ENCODE measurements at regions of chr10 and their contacts with region 1.

Region 1: DNA sequence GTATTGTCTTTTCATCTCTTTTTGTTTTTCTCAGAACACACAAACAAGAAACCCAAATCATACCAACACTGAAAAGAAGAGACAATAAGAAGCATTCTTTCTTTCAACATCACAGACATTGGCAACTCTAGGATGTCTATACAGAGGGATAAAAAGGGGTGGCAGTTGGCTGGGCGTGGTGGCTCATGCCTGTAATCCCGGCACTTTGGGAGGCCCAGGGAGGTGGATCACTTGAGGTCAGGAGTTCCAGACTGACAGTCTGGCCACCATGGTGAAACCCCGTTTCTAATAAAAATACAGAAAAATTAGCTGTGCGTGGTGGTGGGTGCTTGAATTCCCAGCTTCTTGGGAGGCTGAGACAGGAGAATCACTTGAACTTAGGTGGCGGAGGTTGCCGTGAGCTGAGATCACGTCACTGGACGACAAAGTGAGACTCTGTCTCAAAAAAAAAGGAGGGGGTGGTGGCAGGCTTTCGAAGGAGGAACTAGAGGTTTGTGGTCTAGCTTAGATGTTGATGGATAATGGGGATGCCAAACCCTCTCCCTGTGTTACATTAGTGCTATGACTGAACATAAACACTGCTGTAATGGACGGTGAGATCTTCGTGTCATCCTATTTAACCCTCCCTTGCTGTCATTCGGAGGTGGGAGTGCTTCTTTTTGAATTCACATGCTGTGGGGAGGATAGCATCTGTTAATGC is 9.4 kb downstream of the CNNM2 start:
- DNase-seq: no peak
- H3K4me3 ChIP-seq: no peak overlapping the region
- H3K27ac ChIP-seq: no peak overlapping the region
- H3K4me1 ChIP-seq: no peaks in the 10 kb centered on the region
- H3K27me3 ChIP-seq: no peaks in the 10 kb centered on the region

Region 2: DNA sequence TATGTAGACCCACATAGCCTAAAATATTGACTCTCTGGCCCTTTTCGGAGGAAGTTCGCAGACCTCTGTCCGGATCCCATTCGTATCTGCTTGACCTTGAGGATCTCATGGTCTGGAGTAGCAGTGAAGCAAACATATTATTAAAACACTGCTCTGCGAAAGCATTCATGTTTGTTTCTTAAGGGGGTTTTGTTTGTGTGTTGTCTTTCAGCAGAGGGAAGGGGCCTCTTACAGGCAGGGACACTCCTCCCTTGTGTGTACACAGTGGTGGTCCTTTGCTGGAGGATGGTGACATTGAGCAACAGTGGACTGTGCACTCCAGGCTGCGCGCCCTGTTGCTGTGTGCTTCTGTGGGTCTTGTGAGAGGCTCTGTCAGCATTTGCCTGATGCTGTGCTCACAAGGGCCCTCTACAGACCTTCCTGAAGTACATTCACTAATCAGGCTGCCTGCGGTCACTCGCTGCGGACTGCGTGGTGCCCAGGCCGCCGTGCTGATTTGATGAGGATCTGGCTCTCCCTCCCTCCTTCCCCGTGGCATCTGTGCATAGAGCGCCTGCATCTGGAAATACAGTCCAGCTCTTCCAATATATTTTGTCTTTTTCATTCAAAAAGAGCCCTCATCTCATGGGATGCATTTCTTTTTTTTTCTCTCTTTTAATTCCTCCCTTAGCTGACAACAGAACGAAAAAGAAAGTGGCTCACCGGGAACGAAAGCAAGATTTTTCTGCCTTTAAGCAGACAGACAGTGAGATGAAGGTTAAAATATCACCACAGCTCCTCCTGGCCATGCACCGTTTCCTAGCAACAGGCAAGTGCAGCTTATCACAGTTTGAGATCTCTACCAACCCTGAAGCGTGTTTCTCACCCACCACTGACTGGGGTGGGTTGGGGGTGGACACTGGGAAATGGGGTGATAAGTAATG is 126.5 kb after region 1 on chr10:
- in situ Hi-C with region 1: loop called (anchors 10 kb)
- DNase-seq: peak; percentile 22
- H3K4me3 ChIP-seq: no peak overlapping the region
- H3K27ac ChIP-seq: no peak overlapping the region
- H3K4me1 ChIP-seq: no peaks in the 10 kb centered on the region
- H3K27me3 ChIP-seq: no peaks in the 10 kb centered on the region